ENCODE measurements at regions of chr12 and their contacts with region 1.

Region 1: GRCh38 chr12:39103552-39104165 is 198.3 kb upstream of the CPNE8 start:
- DNase-seq: peak; percentile 62
- H3K4me3 ChIP-seq: no peak overlapping the region
- H3K27ac ChIP-seq: no peak overlapping the region
- H3K4me1 ChIP-seq: no peaks in the 10 kb centered on the region
- CTCF ChIP-seq: peak; percentile 86

Region 2: DNA sequence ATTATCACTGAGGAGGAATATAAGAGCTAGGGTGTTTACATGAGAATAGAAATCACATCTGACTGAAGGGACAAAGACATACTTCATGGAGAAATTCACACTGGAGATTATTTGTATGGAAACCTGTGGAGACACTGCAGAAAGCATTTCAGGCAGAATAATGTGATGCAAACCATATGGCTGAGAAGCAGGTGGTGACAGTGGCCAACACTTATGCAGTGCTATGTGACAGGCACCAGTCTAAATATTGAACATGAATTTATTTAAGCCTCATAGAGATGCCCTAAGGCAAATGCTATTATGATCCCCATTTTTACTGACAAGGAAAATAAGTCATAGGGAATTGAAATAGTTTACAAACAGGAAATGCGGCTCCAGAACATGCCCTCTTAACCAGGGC is 770.8 kb before region 1 on chr12:
- CTCF ChIA-PET with region 1: no interaction called
- POLR2A ChIA-PET with region 1: no interaction called
- intact Hi-C with region 1: loop called (anchors 1 kb)
- DNase-seq: no peak
- H3K4me3 ChIP-seq: no peak overlapping the region
- H3K27ac ChIP-seq: no peak overlapping the region
- H3K4me1 ChIP-seq: no peaks in the 10 kb centered on the region
- CTCF ChIP-seq: no peak

Region 3: DNA sequence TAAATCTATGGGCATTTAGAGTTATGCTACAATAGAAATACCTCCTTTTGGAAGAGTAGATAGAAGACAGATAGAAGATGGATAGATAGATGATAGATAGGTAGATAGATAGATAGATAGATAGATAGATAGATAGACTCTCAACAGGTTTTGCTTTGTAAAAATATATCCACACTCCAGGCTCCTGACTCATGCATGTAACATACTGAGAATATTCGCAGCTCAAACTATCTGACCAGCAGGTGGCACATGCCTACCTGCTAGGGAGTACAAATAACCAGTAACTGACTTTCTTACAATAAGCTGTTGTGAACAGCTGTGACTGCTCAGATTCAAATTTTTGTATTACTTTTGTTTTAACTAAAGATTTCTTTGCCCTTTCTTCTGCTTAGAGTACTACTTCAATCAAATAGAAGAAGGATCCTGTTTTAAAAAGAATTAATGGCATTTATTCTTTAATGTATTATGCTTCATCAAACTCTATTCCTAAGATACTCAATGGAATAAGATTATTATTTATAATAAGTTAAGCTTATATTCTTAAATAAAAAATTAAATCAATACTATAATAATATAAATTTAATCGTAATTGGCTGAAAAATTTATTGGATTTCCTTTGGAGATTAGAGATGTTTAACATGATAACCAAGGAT is 182.5 kb before region 1 on chr12:
- CTCF ChIA-PET with region 1: no interaction called
- POLR2A ChIA-PET with region 1: no interaction called
- intact Hi-C with region 1: loop called (anchors 2 kb)
- DNase-seq: peak; percentile 43
- H3K4me3 ChIP-seq: no peak overlapping the region
- H3K27ac ChIP-seq: no peak overlapping the region
- H3K4me1 ChIP-seq: no peaks in the 10 kb centered on the region
- CTCF ChIP-seq: peak; percentile 77

Region 4: DNA sequence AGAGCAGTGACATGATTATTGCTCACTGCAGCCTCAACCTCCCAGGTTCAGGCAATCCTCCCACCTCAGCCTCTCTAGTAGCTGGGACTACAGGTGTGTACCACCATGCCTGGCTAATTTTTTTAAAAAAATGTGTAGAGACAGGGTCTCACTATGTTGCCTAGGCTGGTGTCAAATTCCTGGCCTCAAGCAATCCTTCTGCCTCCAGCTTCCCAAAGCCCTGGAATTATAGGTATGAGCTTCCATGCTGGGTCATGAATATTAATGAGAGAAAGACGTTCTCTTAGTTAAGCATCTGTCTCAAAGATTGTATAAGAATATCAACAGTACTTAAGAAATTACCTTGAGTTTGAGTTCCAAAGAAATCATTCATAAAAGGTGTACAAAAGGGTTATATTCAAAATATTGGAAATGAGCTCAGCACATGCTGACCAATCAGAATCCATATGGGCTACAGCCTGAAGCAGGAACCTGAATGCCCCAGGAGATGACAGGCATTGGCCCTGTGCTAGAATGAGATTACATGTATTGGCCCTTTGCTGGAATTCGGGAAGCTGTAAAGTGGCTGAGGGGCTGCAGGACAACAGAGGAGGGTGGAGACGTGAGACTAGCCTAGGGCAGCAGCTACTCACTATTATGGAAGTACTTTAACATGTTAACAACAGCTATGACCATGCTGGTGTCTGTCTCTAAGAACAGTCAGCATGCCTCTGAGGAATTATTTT is 41.2 kb before region 1 on chr12:
- CTCF ChIA-PET with region 1: no interaction called
- POLR2A ChIA-PET with region 1: no interaction called
- intact Hi-C with region 1: no loop called
- DNase-seq: no peak
- H3K4me3 ChIP-seq: no peak overlapping the region
- H3K27ac ChIP-seq: no peak overlapping the region
- H3K4me1 ChIP-seq: no peaks in the 10 kb centered on the region
- CTCF ChIP-seq: no peak

Measured in OCI-LY7 (cell line).